B cell (primary cell): ENCODE measurements at regions of chr12 and their contacts with region 1.

Region 1: GRCh38 chr12:109880016-109880931 is at the start of gene GLTP:
- DNase-seq: peak; percentile 95
- ATAC-seq: peak; percentile 98
- H3K4me3 ChIP-seq: peak within 1 kb of the TSS; percentile 73 to 91 (median 80)
- H3K4me3 Mint-ChIP-seq: peak within 1 kb of the TSS; percentile 83
- H3K27ac ChIP-seq: peak within 1 kb of the TSS; percentile 77 to 94
- H3K27ac Mint-ChIP-seq: peak within 1 kb of the TSS; percentile 84
- H3K4me1 ChIP-seq: peaks cover 36 to 43% of the 10 kb centered on the region in 2 donors
- H3K4me1 Mint-ChIP-seq: peaks cover 54% of the 10 kb centered on the region
- H3K27me3 ChIP-seq: no peaks in the 10 kb centered on the region
- H3K27me3 Mint-ChIP-seq: no peaks in the 10 kb centered on the region
- CTCF ChIP-seq: peak; percentile 55
- total RNA-seq, gene GLTP: 21.9 and 24.9 TPM in 2 replicates

Region 2: GRCh38 chr12:109573029-109573913 is 307.0 kb before region 1 on chr12 and contains the starts of genes MMAB and MVK:
- CTCF ChIA-PET with region 1: no interaction called
- POLR2A ChIA-PET with region 1: no interaction called
- intact Hi-C with region 1: loop called (anchors 1 kb)
- DNase-seq: peak; percentile 99
- ATAC-seq: peak; percentile 96
- H3K4me3 ChIP-seq: peak within 1 kb of the TSS; percentile 44 to 87 (median 72)
- H3K4me3 Mint-ChIP-seq: peak within 1 kb of the TSS; percentile 96
- H3K27ac ChIP-seq: peak within 1 kb of the TSS; percentile 89 to 98
- H3K27ac Mint-ChIP-seq: peak within 1 kb of the TSS; percentile 94
- H3K4me1 ChIP-seq: peaks cover 14 to 23% of the 10 kb centered on the region in 2 donors
- H3K4me1 Mint-ChIP-seq: peaks cover 29% of the 10 kb centered on the region
- H3K27me3 ChIP-seq: no peaks in the 10 kb centered on the region
- H3K27me3 Mint-ChIP-seq: no peaks in the 10 kb centered on the region
- CTCF ChIP-seq: no peak
- total RNA-seq, gene MMAB: 20.5 and 24.6 TPM in 2 replicates
- total RNA-seq, gene MVK: 12.5 and 15.6 TPM in 2 replicates

Region 3: DNA sequence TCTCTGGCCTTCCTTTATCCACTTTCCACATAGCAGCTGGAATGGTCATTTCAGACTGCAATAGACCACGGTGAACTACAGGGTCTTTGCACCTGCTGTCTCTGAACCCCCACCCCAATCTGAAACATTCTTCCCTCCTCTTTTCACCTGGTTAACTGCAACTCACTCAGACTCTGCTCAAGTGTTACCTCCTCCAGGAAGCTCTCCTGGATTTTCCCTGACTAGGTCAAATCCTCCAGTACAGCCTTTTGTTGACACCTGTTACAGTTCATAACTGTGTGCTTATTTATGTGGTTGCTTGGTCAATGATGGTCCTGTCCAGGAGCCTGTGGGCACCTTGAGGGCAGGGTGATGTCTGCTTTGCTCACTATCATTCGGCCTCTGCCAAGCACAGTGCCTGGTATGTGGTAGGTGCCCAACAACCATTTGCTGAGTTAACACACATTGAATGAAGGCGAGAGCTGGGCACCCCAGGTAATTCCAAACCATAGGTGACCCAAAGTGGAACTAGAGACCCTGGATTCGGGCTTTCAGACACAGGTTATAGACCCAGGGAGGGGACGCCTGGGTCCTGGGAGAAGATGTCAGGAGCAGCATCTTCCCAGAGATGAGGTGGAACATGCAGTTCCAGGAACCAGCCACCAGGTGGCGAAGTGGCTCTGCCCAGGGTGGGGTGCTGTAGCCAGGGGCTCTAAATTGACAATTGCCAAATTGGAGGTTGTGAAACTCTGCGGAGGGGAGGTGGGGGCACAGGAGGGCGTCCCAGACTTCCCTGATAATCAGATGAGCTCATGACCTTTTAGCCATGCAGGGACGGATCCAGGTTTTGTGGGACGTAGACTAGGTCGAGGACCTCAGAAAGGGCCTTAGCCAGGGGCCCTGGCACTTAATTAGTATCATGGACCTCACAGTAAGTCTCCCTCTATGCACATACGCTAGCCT is 75.2 kb before region 1 on chr12:
- CTCF ChIA-PET with region 1: interaction called, 11 read pairs
- POLR2A ChIA-PET with region 1: no interaction called
- intact Hi-C with region 1: no loop called
- DNase-seq: peak; percentile 78
- ATAC-seq: peak; percentile 92
- H3K4me3 ChIP-seq: no peak overlapping the region
- H3K4me3 Mint-ChIP-seq: no peak overlapping the region
- H3K27ac ChIP-seq: no peak overlapping the region
- H3K27ac Mint-ChIP-seq: no peak overlapping the region
- H3K4me1 ChIP-seq: no peaks in the 10 kb centered on the region
- H3K4me1 Mint-ChIP-seq: peaks cover 1% of the 10 kb centered on the region
- H3K27me3 ChIP-seq: no peaks in the 10 kb centered on the region
- H3K27me3 Mint-ChIP-seq: no peaks in the 10 kb centered on the region
- CTCF ChIP-seq: peak; percentile 96

Region 4: DNA sequence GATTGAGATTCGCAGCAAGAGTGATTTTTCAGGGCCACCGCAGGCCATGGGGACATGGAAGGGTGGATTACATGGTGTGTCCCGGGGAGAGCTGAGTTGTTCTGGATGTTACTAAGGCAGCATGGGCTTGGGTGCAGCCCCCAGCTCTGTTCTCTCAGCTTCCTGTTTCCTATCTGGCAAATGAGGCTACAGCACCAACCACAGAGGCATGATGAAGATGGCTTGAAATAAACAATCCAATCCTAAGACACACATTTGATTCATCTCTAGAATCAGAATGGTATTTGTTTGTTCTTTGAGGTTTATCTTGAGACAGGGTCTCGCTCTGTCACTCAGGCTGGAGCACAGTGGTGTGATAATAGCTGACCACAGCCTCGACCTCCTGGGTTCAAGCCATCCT is 21.5 kb before region 1 on chr12:
- CTCF ChIA-PET with region 1: interaction called, 12 read pairs
- POLR2A ChIA-PET with region 1: no interaction called
- intact Hi-C with region 1: loop called (anchors 1 kb)
- DNase-seq: no peak
- ATAC-seq: no peak
- H3K4me3 ChIP-seq: no peak overlapping the region
- H3K4me3 Mint-ChIP-seq: no peak overlapping the region
- H3K27ac ChIP-seq: no peak overlapping the region
- H3K27ac Mint-ChIP-seq: no peak overlapping the region
- H3K4me1 ChIP-seq: no peaks in the 10 kb centered on the region
- H3K4me1 Mint-ChIP-seq: peaks cover 2% of the 10 kb centered on the region
- H3K27me3 ChIP-seq: no peaks in the 10 kb centered on the region
- H3K27me3 Mint-ChIP-seq: no peaks in the 10 kb centered on the region
- CTCF ChIP-seq: no peak

Region 5: GRCh38 chr12:109995686-109996482 is 115.6 kb after region 1 on chr12 and contains the start of gene GIT2:
- CTCF ChIA-PET with region 1: no interaction called
- POLR2A ChIA-PET with region 1: no interaction called
- intact Hi-C with region 1: loop called (anchors 10 kb)
- DNase-seq: peak; percentile 95
- ATAC-seq: peak; percentile 69
- H3K4me3 ChIP-seq: peak within 1 kb of the TSS; percentile 68 to 99 (median 74)
- H3K4me3 Mint-ChIP-seq: peak within 1 kb of the TSS; percentile 90
- H3K27ac ChIP-seq: peak within 1 kb of the TSS; percentile 69 to 90
- H3K27ac Mint-ChIP-seq: peak within 1 kb of the TSS; percentile 91
- H3K4me1 ChIP-seq: peaks cover 39 to 47% of the 10 kb centered on the region in 2 donors
- H3K4me1 Mint-ChIP-seq: peaks cover 67% of the 10 kb centered on the region
- H3K27me3 ChIP-seq: no peaks in the 10 kb centered on the region
- H3K27me3 Mint-ChIP-seq: no peaks in the 10 kb centered on the region
- CTCF ChIP-seq: no peak
- total RNA-seq, gene GIT2: 163 and 177 TPM in 2 replicates

Region 6: GRCh38 chr12:110048242-110049027 is 168.2 kb after region 1 on chr12 and contains the start of gene C12orf76:
- CTCF ChIA-PET with region 1: no interaction called
- POLR2A ChIA-PET with region 1: interaction called, 6 read pairs
- intact Hi-C with region 1: loop called (anchors 10 kb)
- DNase-seq: peak; percentile 96
- ATAC-seq: peak; percentile 98
- H3K4me3 ChIP-seq: peak within 1 kb of the TSS; percentile 66 to 95 (median 74)
- H3K4me3 Mint-ChIP-seq: peak within 1 kb of the TSS; percentile 91
- H3K27ac ChIP-seq: peak within 1 kb of the TSS; percentile 86 to 89
- H3K27ac Mint-ChIP-seq: peak within 1 kb of the TSS; percentile 98
- H3K4me1 ChIP-seq: peaks cover 23 to 44% of the 10 kb centered on the region in 2 donors
- H3K4me1 Mint-ChIP-seq: peaks cover 44% of the 10 kb centered on the region
- H3K27me3 ChIP-seq: no peaks in the 10 kb centered on the region
- H3K27me3 Mint-ChIP-seq: no peaks in the 10 kb centered on the region
- CTCF ChIP-seq: no peak
- total RNA-seq, gene C12orf76: 26.2 and 28.5 TPM in 2 replicates